K562 (cell line): ENCODE measurements at regions of chr1 and their contacts with region 1.

Region 1: GRCh38 chr1:222618001-222618879 is at the start of gene MIA3:
- DNase-seq: peak; percentile 83 to 96 (median 95)
- ATAC-seq: peak; percentile 90
- H3K4me3 ChIP-seq: peak within 1 kb of the TSS; percentile 86
- H3K27ac ChIP-seq: peak within 1 kb of the TSS; percentile 84
- H3K4me1 ChIP-seq: peaks cover 8 to 14% of the 10 kb centered on the region in 2 experiments; a peak in 4 of 5 replicates
- H3K27me3 ChIP-seq: no peaks in the 10 kb centered on the region
- CTCF ChIP-seq: no peak
- EP300 ChIP-seq: no peak
- POLR2A ChIP-seq: peak; percentile 84
- RAD21 ChIP-seq: no peak
- polyA plus RNA-seq, gene MIA3: 21.6 to 40.8 TPM

Region 2: GRCh38 chr1:222161676-222162075 is 456.6 kb before region 1 on chr1:
- CTCF ChIA-PET with region 1: no interaction called
- POLR2A ChIA-PET with region 1: no interaction called
- in situ Hi-C with region 1: no loop called
- intact Hi-C with region 1: no loop called
- DNase-seq: no peak
- ATAC-seq: no peak
- H3K4me3 ChIP-seq: no peak overlapping the region
- H3K27ac ChIP-seq: no peak overlapping the region
- H3K4me1 ChIP-seq: no peaks in the 10 kb centered on the region
- H3K27me3 ChIP-seq: no peaks in the 10 kb centered on the region
- CTCF ChIP-seq: no peak
- EP300 ChIP-seq: no peak
- POLR2A ChIP-seq: no peak
- RAD21 ChIP-seq: no peak

Region 3: GRCh38 chr1:222521299-222522104 is 96.7 kb before region 1 on chr1:
- CTCF ChIA-PET with region 1: no interaction called
- POLR2A ChIA-PET with region 1: no interaction called
- in situ Hi-C with region 1: no loop called
- intact Hi-C with region 1: no loop called
- DNase-seq: peak in 1 of 4 experiments; percentile 24
- ATAC-seq: peak; percentile 84
- H3K4me3 ChIP-seq: no peak overlapping the region
- H3K27ac ChIP-seq: no peak overlapping the region
- H3K4me1 ChIP-seq: no peaks in the 10 kb centered on the region; a peak in 1 of 5 replicates
- H3K27me3 ChIP-seq: peaks cover 15 to 29% of the 10 kb centered on the region in 2 experiments; a peak in 4 of 5 replicates
- CTCF ChIP-seq: no peak
- EP300 ChIP-seq: no peak
- POLR2A ChIP-seq: no peak
- RAD21 ChIP-seq: no peak

Region 4: DNA sequence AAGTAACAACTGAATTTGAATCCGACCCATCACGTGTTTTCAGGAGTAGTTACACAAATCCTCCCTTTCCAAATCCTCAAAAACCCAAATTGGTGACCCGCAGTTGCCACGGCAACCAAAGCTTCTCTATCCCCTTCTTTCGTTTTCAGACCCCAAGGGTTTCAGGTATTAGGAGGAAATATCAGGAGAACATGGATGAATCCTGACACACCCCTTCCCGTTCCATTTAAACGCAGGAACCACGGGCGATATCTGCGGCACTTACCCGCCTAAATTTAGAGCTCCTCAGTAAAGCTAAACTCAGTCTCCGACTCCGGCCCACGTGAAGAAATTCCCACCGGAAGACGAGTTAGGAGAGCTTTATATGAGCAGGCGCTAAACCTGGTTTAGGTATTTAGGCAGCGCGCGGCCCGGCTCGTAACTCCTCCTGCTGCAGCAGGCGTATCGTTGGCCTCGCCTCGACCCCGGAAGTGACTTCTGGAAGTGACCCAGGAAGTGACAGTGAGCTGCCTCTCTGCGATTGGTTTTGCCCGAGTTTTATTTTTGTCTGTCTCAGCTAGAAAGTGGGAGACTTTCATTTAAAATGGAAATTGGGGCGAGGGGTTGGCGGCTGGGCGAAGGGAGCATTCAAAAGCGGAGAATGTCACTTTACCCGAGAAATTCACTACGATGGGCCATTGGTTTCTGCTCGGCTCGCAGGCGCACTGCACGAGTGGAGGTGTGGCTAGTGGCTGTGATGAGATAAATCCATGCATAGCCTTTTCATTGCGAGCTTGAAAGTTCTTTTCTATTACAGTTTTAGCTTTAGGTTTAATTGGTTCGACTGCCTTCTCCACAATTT is 28.6 kb before region 1 on chr1 and contains the start of gene TAF1A:
- CTCF ChIA-PET with region 1: no interaction called
- POLR2A ChIA-PET with region 1: interaction called, 3 read pairs
- in situ Hi-C with region 1: no loop called
- intact Hi-C with region 1: loop called (anchors 2 kb)
- DNase-seq: peak; percentile 89 to 96 (median 90)
- ATAC-seq: peak; percentile 97
- H3K4me3 ChIP-seq: peak within 1 kb of the TSS; percentile 69
- H3K27ac ChIP-seq: peak within 1 kb of the TSS; percentile 91
- H3K4me1 ChIP-seq: peaks cover 0 to 3% of the 10 kb centered on the region in 2 experiments; a peak in 2 of 5 replicates
- H3K27me3 ChIP-seq: no peaks in the 10 kb centered on the region; a peak in 1 of 5 replicates
- CTCF ChIP-seq: no peak; a peak in 3 of 6 replicates
- EP300 ChIP-seq: no peak
- POLR2A ChIP-seq: peak; percentile 92
- RAD21 ChIP-seq: peak in 1 of 2 experiments; percentile 25; a peak in 2 of 4 replicates
- polyA plus RNA-seq, gene TAF1A: 33.6 to 36.8 TPM

Region 5: DNA sequence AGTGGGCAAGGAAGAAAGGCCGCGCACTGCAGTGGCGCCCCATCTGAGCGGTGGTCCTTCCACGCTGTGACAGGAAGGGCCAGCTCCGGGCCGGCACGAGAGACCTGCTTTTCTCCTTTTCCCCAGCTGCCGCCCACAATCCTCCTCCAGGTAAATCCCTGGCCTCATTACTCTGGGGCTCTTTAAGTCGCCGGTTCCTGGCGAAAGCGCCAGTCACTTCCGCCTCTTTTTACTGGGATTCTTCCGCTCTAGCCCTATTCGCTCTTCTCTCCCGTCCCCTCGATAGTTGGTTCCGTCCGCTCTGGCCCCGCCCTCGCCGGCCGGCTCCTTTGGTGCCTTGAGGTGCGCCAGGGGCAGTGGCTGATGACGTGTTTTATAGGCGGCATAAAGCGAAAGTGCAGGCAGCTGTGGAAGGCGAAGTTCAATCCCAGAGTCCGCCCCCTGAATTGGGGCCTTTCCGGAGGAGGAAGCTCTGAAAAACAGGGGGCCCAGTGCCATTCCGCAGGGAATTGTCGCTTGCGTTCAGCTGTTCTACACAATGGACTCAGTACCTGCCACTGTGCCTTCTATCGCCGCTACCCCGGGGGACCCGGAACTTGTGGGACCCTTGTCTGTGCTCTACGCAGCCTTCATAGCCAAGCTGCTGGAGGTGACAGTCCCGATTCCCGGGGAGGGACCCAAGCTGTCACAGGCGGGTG is 25.8 kb after region 1 on chr1:
- CTCF ChIA-PET with region 1: interaction called, 3 read pairs
- POLR2A ChIA-PET with region 1: no interaction called
- in situ Hi-C with region 1: no loop called
- intact Hi-C with region 1: loop called (anchors 2 kb)
- DNase-seq: peak; percentile 95 to 100 (median 96)
- ATAC-seq: peak; percentile 97
- H3K4me3 ChIP-seq: peak overlapping the region; percentile 88
- H3K27ac ChIP-seq: peak overlapping the region; percentile 88
- H3K4me1 ChIP-seq: no peaks in the 10 kb centered on the region; a peak in 2 of 5 replicates
- H3K27me3 ChIP-seq: no peaks in the 10 kb centered on the region
- CTCF ChIP-seq: no peak; a peak in 1 of 6 replicates
- EP300 ChIP-seq: peak; percentile 49
- POLR2A ChIP-seq: peak; percentile 98
- RAD21 ChIP-seq: no peak

Region 6: DNA sequence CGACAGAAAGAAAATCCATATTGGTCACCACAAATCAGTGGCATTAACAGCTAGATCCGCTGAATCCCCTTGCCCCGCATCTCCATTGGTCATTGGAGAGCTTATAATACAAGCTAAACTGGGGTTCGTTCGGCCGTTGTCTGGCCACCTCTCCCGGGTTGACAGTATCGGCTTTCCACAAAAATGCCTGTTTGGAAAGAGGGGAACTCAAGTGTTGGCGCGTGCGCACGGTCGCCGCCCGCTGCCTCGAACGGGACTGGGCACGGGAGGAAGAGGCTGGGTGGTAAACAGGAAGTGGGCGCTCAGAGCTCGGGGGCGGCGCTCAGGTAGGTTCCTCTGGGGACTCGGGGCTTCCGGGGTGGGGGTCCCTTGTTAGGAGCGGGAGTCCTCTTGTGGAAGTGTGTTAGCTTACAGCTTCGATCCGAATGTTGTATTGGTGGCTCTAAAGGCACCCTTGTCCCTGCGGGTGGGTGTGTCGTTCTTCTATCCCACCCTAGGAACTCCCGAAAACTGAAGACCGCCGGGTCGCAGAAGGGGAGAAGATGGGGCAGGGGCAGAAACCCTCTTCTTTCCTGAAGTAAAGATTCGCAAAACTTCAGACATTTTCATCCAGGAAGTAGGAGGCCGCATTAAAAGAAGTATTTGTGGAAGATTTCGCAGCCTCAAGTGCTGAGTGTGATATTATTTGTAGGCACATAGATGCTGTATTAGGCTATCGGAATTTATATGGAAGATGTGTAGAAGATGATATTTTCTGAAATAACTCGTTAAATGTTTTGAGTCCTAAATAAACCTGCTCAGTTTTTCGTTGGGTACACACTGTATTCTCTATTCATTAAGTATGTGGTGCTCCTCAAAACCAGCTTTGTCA is 95.1 kb after region 1 on chr1:
- CTCF ChIA-PET with region 1: no interaction called
- POLR2A ChIA-PET with region 1: no interaction called
- in situ Hi-C with region 1: no loop called
- intact Hi-C with region 1: no loop called
- DNase-seq: peak; percentile 85 to 98 (median 88)
- ATAC-seq: peak; percentile 76
- H3K4me3 ChIP-seq: peak overlapping the region; percentile 71
- H3K27ac ChIP-seq: peak overlapping the region; percentile 98
- H3K4me1 ChIP-seq: peaks cover 19% of the 10 kb centered on the region in 2 experiments; a peak in 4 of 5 replicates
- H3K27me3 ChIP-seq: no peaks in the 10 kb centered on the region
- CTCF ChIP-seq: peak in 2 of 3 experiments; percentile 14 to 22; a peak in 2 of 6 replicates
- EP300 ChIP-seq: peak; percentile 36
- POLR2A ChIP-seq: peak; percentile 86
- RAD21 ChIP-seq: no peak

Region 7: DNA sequence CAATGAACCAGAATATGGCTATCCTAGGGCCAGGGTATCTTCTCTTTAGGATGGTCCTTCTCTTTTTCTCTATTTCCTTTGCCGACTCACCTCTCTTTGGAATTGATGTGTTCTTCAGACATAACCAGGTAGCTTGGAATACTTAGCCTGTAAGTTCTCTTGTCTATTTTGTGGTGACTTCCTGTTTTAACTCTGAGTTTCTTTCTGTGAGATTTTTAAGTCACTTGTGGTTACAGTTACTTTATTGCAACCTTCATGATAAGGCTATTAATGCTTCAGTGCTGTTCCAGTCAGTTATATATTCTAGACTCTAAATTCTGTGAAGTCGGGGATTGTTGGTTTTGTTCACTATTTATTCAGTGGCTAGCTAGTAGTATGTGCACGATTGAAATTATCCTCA is 242.8 kb after region 1 on chr1:
- CTCF ChIA-PET with region 1: no interaction called
- POLR2A ChIA-PET with region 1: no interaction called
- in situ Hi-C with region 1: no loop called
- intact Hi-C with region 1: no loop called
- DNase-seq: no peak
- ATAC-seq: no peak
- H3K4me3 ChIP-seq: no peak overlapping the region
- H3K27ac ChIP-seq: no peak overlapping the region
- H3K4me1 ChIP-seq: no peaks in the 10 kb centered on the region
- H3K27me3 ChIP-seq: no peaks in the 10 kb centered on the region
- CTCF ChIP-seq: no peak
- EP300 ChIP-seq: no peak
- POLR2A ChIP-seq: no peak
- RAD21 ChIP-seq: no peak